IMR-90 (cell line): ENCODE measurements at regions of chr7 and their contacts with region 1.

Region 1: DNA sequence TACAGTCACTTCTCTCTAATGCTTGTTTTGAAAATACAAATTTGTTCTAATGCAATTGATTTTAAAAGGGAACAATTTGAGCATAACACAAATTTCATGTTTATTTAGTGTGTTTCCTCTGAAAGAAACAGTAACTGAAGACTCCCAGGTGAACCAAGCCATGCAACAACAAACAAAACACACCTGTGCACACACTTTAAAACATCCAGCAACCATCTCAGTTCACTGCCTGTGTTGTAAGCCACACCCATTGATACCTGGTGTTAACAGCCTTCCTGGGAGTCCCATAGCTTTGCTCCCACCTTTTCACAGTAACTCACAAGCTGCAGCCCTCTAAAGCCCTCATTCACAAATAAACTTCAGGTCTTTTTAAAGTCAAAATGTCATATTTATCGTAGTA is 89.3 kb downstream of the DOCK4 start:
- DNase-seq: no peak
- ATAC-seq: no peak
- H3K4me3 ChIP-seq: no peak overlapping the region
- H3K27ac ChIP-seq: no peak overlapping the region
- H3K4me1 ChIP-seq: no peaks in the 10 kb centered on the region
- H3K27me3 ChIP-seq: no peaks in the 10 kb centered on the region
- CTCF ChIP-seq: no peak
- POLR2A ChIP-seq: no peak
- RAD21 ChIP-seq: no peak

Region 2: GRCh38 chr7:112162142-112163020 is 45.5 kb after region 1 on chr7:
- CTCF ChIA-PET with region 1: no interaction called
- POLR2A ChIA-PET with region 1: no interaction called
- dilution Hi-C with region 1: no loop called
- in situ Hi-C with region 1: no loop called
- intact Hi-C with region 1: loop called (anchors 5 kb)
- DNase-seq: peak; percentile 58
- ATAC-seq: peak; percentile 76
- H3K4me3 ChIP-seq: no peak overlapping the region
- H3K27ac ChIP-seq: no peak overlapping the region
- H3K4me1 ChIP-seq: peaks cover 6% of the 10 kb centered on the region
- H3K27me3 ChIP-seq: no peaks in the 10 kb centered on the region
- CTCF ChIP-seq: no peak
- POLR2A ChIP-seq: no peak
- RAD21 ChIP-seq: no peak